ENCODE measurements at regions of chr6 and their contacts with region 1.

Region 1: GRCh38 chr6:137313928-137314855 is 95.0 kb upstream of the IFNGR1 start:
- DNase-seq: peak; percentile 62
- H3K4me3 ChIP-seq: no peak overlapping the region
- H3K27ac ChIP-seq: no peak overlapping the region
- H3K4me1 ChIP-seq: peaks cover 4% of the 10 kb centered on the region
- H3K27me3 ChIP-seq: peaks cover 0 to 12% of the 10 kb centered on the region in 2 experiments
- CTCF ChIP-seq: peak; percentile 73 to 86
- POLR2A ChIP-seq: no peak

Region 2: GRCh38 chr6:136967876-136968752 is 346.1 kb before region 1 on chr6:
- CTCF ChIA-PET with region 1: interaction called, 8 read pairs
- POLR2A ChIA-PET with region 1: no interaction called
- dilution Hi-C with region 1: no loop called
- intact Hi-C with region 1: loop called (anchors 1 kb)
- DNase-seq: peak; percentile 65
- H3K4me3 ChIP-seq: no peak overlapping the region
- H3K27ac ChIP-seq: no peak overlapping the region
- H3K4me1 ChIP-seq: no peaks in the 10 kb centered on the region
- H3K27me3 ChIP-seq: peaks cover 0 to 10% of the 10 kb centered on the region in 2 experiments
- CTCF ChIP-seq: peak; percentile 55 to 57
- POLR2A ChIP-seq: no peak

Region 3: DNA sequence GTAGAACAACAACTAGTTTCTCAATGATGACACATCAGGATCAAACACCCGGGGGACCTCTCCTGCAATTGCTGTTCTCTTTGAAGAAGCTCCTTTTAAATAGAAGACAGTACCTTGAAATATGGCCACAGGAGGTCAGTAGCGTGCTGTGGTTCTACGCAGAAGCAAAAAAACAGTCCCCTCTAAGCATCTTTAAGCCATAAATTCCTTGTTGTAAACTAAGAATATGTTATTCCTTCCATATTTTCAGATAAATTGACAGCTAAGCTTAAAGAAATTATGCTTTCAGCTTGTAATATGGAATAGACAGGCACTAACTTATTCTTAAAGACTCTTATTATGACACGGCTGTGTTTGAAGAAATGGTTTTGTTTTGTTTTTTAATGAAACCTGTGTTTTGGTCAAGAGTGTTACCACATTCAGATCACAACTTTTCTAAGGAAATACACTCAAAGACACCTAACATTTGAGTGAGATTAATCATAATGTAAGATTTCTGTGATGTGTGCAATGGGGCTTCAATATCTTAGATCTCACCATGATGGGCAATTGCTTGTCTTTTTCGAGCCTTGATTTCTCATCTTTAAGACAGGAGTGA is 219.7 kb before region 1 on chr6:
- CTCF ChIA-PET with region 1: interaction called, 141 read pairs
- POLR2A ChIA-PET with region 1: no interaction called
- dilution Hi-C with region 1: no loop called
- intact Hi-C with region 1: loop called (anchors 1 kb)
- DNase-seq: peak; percentile 75
- H3K4me3 ChIP-seq: no peak overlapping the region
- H3K27ac ChIP-seq: no peak overlapping the region
- H3K4me1 ChIP-seq: no peaks in the 10 kb centered on the region
- H3K27me3 ChIP-seq: peaks cover 3 to 4% of the 10 kb centered on the region in 2 experiments
- CTCF ChIP-seq: peak; percentile 50 to 53
- POLR2A ChIP-seq: no peak

Region 4: GRCh38 chr6:137218917-137219663 is 95.1 kb before region 1 on chr6 and contains the start of gene IFNGR1:
- CTCF ChIA-PET with region 1: interaction called, 9 read pairs
- POLR2A ChIA-PET with region 1: no interaction called
- dilution Hi-C with region 1: no loop called
- intact Hi-C with region 1: loop called (anchors 5 kb)
- DNase-seq: peak; percentile 93
- H3K4me3 ChIP-seq: peak within 1 kb of the TSS; percentile 9 to 85 (median 73)
- H3K27ac ChIP-seq: peak within 1 kb of the TSS; percentile 26
- H3K4me1 ChIP-seq: peaks cover 39% of the 10 kb centered on the region
- H3K27me3 ChIP-seq: no peaks in the 10 kb centered on the region
- CTCF ChIP-seq: no peak
- POLR2A ChIP-seq: peak; percentile 87
- total RNA-seq, gene IFNGR1: 27.5 and 31.2 TPM in 2 replicates

Region 5: DNA sequence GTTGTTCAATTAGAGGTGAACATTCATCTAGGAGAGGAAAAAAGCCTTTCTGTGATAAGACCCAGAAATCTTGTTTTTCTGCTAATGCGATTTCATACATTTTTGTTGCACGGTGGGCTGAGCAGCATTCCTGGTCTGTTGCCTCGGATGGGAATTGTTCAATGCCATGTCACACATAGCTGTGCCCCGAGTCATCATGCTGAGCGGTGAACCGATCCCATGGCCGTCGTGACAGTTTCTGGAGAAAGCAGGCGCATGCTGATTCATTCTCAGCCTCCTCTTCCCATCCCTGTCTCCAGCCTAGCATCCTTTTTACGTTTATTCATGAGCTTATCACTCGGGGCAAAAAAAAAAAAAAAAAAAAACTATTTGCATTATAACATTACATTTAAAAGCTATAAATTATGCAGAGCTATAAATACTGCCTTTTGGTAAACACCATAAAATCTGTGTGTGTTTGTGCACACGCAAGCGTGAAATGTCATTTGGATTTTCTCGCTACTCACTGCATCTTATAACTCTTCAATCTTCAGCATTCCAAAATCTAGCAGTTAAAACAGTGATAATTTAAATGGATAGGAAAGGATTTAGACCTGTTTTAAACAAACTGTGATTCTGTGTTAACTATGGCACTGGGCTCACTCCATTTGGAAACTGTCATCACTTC is 36.1 kb before region 1 on chr6:
- CTCF ChIA-PET with region 1: interaction called, 19 read pairs
- POLR2A ChIA-PET with region 1: no interaction called
- dilution Hi-C with region 1: no loop called
- intact Hi-C with region 1: no loop called
- DNase-seq: peak; percentile 40
- H3K4me3 ChIP-seq: no peak overlapping the region
- H3K27ac ChIP-seq: peak overlapping the region; percentile 15
- H3K4me1 ChIP-seq: peaks cover 2% of the 10 kb centered on the region
- H3K27me3 ChIP-seq: no peaks in the 10 kb centered on the region
- CTCF ChIP-seq: no peak
- POLR2A ChIP-seq: no peak

Region 6: DNA sequence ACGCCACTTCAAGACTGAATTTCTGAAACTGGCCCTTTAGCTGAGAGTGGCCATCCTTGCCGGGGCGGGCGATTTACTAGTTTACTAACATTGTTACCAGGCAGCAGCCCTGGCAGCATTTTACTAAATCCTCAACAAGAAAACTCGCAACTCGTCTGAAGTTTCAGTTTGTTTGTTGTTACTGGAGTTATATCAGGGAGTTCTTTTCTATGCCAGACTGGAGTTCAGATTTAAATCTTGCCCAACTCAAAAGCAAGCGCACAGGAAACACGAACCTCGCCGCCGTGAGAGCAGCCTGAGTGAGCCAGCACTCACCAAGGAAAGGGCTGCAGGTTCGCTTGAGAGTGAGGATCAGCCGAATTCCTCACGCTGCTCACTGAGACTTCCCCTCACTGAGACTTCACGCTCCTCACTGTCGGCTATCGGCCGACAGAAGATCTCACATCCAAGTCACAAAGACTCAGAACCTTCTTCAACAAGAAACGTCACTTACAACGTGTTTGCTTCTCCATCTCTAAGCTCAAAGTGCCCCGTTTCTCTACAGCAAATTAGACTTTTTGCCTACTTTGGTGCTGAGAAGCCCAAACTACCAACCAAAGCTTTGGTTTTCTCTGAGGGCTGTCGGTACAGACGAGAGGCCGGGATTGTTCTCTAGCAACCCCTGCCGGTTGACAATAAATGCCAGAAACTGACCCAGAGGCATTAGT is 101.1 kb after region 1 on chr6:
- CTCF ChIA-PET with region 1: interaction called, 5 read pairs
- POLR2A ChIA-PET with region 1: no interaction called
- dilution Hi-C with region 1: no loop called
- intact Hi-C with region 1: loop called (anchors 1 kb)
- DNase-seq: peak; percentile 73
- H3K4me3 ChIP-seq: peak overlapping the region in 2 of 3 experiments; percentile 25 to 59
- H3K27ac ChIP-seq: no peak overlapping the region
- H3K4me1 ChIP-seq: no peaks in the 10 kb centered on the region
- H3K27me3 ChIP-seq: peaks cover 19 to 28% of the 10 kb centered on the region in 2 experiments
- CTCF ChIP-seq: peak; percentile 56 to 71
- POLR2A ChIP-seq: no peak

Measured in endothelial cell of umbilical vein (primary cell).